ENCODE measurements at regions of chr13 and their contacts with region 1.

Region 1: GRCh38 chr13:33204130-33204927 is 81.2 kb downstream of the STARD13 start:
- DNase-seq: no peak
- H3K4me3 Mint-ChIP-seq: peak overlapping the region; percentile 78
- H3K27ac Mint-ChIP-seq: peak overlapping the region; percentile 76
- H3K4me1 Mint-ChIP-seq: peaks cover 65% of the 10 kb centered on the region
- H3K27me3 Mint-ChIP-seq: no peaks in the 10 kb centered on the region

Region 2: GRCh38 chr13:33004511-33004910 is 199.8 kb before region 1 on chr13:
- intact Hi-C with region 1: no loop called
- DNase-seq: no peak
- H3K4me3 Mint-ChIP-seq: no peak overlapping the region
- H3K27ac Mint-ChIP-seq: no peak overlapping the region
- H3K4me1 Mint-ChIP-seq: peaks cover 7% of the 10 kb centered on the region
- H3K27me3 Mint-ChIP-seq: no peaks in the 10 kb centered on the region

Region 3: GRCh38 chr13:33087091-33087490 is 117.2 kb before region 1 on chr13:
- intact Hi-C with region 1: loop called (anchors 5 kb)
- DNase-seq: no peak
- H3K4me3 Mint-ChIP-seq: no peak overlapping the region
- H3K27ac Mint-ChIP-seq: peak overlapping the region; percentile 69
- H3K4me1 Mint-ChIP-seq: peaks cover 20% of the 10 kb centered on the region
- H3K27me3 Mint-ChIP-seq: peaks cover 2% of the 10 kb centered on the region

Region 4: DNA sequence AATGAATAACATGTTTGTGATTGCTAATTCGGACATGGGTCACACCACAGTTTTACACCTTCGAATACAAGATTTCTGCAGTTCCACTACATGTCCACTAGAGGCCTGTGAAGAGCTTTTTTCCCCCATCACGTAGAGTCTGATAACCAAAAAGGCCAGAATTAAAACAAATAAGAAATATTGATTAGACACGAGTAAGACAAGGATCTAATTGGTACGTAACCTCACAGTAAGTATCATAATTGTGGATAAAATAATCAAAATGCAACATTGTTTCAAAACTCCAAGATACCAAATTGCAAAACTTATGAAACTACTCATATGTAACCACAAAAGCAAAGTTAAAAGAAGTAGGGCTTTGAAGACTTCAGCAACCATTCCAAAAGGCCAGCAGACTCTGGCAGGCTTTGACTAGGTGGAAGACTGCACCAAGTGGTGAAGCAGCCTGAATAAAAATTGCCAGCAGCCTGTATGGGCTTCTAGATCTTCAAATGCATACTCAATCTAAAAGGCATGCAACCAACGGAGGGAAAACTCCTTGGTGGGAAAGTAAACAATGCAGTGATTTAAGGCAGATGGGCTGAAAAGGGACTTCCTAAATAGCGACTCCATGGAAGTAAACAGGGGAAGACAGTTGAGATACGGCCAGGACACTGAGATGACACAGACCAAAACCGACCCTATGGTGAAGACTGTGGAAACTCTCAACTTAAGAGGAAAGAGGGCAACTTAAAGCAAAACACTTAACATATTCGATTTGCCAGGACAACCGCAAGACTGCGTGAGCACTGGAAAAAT is 24.5 kb after region 1 on chr13:
- intact Hi-C with region 1: no loop called
- DNase-seq: no peak
- H3K4me3 Mint-ChIP-seq: no peak overlapping the region
- H3K27ac Mint-ChIP-seq: no peak overlapping the region
- H3K4me1 Mint-ChIP-seq: peaks cover 11% of the 10 kb centered on the region
- H3K27me3 Mint-ChIP-seq: no peaks in the 10 kb centered on the region

Region 5: DNA sequence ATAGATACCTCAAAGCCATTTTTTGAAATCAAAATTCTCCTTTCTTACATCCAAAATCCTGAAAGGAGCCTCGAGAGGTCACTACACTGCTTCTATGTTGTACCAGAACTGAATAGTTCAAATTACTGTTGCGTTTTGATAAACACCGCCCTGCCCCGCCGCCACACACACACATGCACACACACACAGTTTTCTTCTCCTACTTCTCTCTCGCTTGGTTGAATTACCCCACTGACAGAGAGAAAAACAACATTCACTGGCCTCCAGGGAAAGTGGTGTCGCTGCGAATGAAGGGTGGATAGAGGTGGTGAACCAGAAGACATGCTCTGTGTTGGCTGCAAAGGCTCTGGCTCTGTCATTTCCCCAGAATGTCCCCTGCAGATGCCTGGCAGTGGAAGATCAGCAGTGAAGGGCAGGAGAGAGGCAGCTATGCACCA is 430.2 kb after region 1 on chr13:
- intact Hi-C with region 1: no loop called
- DNase-seq: no peak
- H3K4me3 Mint-ChIP-seq: no peak overlapping the region
- H3K27ac Mint-ChIP-seq: no peak overlapping the region
- H3K4me1 Mint-ChIP-seq: peaks cover 21% of the 10 kb centered on the region
- H3K27me3 Mint-ChIP-seq: peaks cover 4% of the 10 kb centered on the region

Region 6: DNA sequence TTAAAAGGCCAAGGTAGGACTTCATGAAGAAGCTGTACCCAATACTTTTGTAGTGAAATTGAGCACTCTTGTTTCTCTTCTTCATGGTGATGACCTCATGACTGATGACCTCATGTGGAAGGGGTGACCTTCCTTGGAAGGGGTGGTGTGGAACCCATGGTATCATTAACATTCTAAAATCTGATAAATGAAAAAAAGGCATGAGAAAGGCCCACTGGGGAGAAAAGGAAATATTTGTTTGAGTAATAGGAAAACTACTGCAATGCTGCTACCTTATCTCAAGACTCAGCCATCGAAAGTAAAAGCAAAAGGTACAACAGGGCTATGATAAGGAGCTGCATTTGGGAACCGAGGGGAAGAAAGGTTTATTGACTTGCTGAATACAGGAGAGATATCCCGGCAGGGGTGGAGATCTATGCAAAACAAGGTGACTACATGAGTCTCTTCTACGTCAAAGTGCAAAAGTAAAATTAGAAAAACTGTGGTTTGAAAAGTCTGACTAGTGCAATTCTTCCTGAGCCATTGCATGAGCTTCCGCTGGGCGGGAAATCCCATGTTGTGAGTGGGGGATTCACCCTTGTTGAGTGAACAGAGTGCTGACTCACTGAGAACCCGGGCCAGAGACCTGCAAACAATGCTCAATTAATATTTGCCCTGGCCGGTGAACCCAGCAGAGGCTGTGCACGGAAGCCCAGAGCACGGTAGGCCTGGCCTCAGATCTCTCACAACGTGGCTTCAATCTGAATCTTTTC is 474.8 kb after region 1 on chr13:
- intact Hi-C with region 1: loop called (anchors 2 kb)
- DNase-seq: peak; percentile 71
- H3K4me3 Mint-ChIP-seq: peak overlapping the region; percentile 73
- H3K27ac Mint-ChIP-seq: peak overlapping the region; percentile 91
- H3K4me1 Mint-ChIP-seq: peaks cover 36% of the 10 kb centered on the region
- H3K27me3 Mint-ChIP-seq: peaks cover 2% of the 10 kb centered on the region